Lower leg skin (tissue), 4 donors: ENCODE measurements at regions of chrX and their contacts with region 1.

Region 1: DNA sequence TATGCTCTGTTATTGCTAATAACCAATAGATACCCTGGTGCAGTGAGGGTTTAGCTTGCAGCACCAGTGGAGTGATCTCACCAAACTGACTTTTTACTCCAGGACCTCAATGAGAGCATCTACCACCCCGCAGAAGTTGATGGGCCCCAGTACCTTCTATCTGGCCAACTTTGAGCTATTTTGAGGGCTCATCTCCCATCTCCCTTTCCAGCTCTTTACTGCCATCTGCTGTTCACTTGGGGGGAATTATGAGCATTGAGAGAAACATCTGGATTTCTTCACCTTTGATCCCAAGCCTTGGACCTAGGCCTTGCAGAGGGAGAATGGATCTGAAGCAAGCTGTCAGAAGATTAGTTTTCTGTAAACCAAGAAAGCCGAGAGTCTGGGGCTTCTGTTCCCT is 143.6 kb downstream of the TMEM164 start:
- DNase-seq: peak in 1 of 2 donors; percentile 21
- H3K4me3 ChIP-seq: no peak overlapping the region
- CTCF ChIP-seq: no peak
- POLR2A ChIP-seq: no peak

Region 2: DNA sequence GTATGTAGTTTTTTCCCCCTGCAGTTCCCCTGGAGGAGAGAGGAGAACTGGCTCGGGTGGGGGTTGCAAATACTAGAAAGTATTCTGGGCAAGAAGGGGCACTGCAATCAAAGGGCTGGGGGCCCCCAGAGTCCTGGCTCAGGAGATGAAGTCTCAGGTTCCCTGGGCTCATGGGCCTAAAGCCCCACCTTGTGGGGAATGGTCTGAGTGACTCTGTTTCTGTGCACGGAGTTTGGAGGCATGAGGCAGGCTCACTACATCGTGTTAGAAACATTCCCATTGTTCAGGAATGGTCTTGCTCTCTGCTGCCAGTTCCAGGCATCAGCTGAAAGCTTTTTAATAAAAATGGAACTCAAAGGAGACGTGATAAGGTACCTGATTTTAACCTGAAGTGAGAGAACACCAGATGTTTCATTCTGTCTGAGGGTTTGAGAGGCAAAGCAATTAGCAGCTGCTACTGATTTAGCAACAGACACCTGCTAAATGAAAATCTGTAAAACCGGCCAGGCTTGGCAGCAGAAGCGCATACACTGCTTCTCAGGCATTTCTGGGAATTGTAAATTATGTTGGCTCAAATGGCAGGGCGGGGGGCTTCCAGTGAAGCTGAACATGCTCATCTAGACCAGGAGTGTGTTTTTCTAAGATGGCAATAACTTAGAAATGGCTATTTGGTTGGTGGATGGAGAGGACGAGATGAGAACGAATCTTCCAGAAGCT is 20.9 kb before region 1 on chrX:
- intact Hi-C with region 1: loop called (anchors 1 kb)
- DNase-seq: no peak
- H3K4me3 ChIP-seq: no peak overlapping the region
- CTCF ChIP-seq: no peak
- POLR2A ChIP-seq: no peak